T-cell (primary cell): ENCODE measurements at regions of chr15 and their contacts with region 1.

Region 1: DNA sequence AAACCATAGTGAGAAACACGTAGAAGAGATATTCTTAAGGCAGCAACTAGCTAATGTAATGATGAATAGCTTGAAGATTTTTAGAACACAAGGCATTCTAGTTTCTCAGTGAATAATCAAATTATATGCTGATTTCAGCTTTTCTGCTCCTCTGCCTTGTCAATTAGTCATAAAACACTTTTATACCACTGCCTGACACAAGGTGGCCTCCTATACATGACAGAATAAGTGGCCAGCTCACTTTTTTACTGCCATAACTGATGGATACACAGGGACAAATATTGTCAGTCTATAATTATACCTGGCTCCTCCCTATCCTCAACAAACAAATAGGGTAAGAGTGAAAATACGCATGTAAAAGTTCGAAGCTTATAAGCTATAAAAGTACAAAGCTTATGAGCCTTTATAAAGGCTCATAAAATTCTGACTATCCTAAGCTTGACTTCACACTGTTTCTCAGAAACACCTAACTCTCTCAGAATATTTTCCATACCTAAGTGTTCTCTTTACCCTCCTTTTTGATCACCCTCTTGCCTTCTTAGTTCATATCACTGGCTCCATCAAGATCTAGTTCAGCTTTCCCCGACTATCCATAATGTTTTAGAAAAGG is 81.6 kb downstream of the HERC1 start:
- DNase-seq: peak in 22 of 35 experiments; percentile 9 to 71 (median 30)
- ATAC-seq: peak; percentile 58 to 77 (median 74)
- H3K4me3 ChIP-seq: no peak overlapping the region
- H3K4me3 Mint-ChIP-seq: no peak overlapping the region
- H3K27ac ChIP-seq: no peak overlapping the region
- H3K27ac Mint-ChIP-seq: peak overlapping the region; percentile 41 to 79
- H3K4me1 ChIP-seq: peaks cover 0 to 10% of the 10 kb centered on the region in 2 experiments
- H3K4me1 Mint-ChIP-seq: peaks cover 0 to 8% (median 6%) of the 10 kb centered on the region in 3 donors
- H3K27me3 ChIP-seq: no peaks in the 10 kb centered on the region
- H3K27me3 Mint-ChIP-seq: no peaks in the 10 kb centered on the region

Region 2: GRCh38 chr15:61888074-61888780 is 1864.0 kb before region 1 on chr15:
- CTCF ChIA-PET with region 1: no interaction called
- POLR2A ChIA-PET with region 1: no interaction called
- DNase-seq: no peak
- ATAC-seq: no peak
- H3K4me3 ChIP-seq: no peak overlapping the region
- H3K4me3 Mint-ChIP-seq: no peak overlapping the region
- H3K27ac ChIP-seq: no peak overlapping the region
- H3K27ac Mint-ChIP-seq: no peak overlapping the region
- H3K4me1 ChIP-seq: no peaks in the 10 kb centered on the region
- H3K4me1 Mint-ChIP-seq: no peaks in the 10 kb centered on the region
- H3K27me3 ChIP-seq: no peaks in the 10 kb centered on the region
- H3K27me3 Mint-ChIP-seq: no peaks in the 10 kb centered on the region

Region 3: DNA sequence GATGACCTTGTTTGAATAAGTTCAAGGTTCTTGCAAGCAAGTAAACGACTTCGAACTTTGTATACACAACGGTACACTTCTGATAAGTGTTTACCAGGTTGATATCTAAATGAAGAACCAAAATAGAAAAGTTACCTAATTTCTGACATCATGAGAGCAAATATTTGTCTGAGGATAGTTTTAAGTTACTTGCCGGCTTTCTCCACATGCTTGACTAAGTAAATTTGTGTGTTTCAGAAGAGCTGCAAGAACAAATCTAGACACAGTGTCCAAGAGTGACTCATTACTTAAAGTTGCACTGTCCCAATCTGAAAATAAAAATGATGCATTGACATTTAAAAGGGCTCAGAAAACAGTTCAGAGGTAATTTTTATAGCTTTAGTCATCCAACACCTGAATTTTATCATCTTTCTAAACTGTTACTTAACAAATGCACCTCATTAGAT is 33.6 kb before region 1 on chr15:
- CTCF ChIA-PET with region 1: no interaction called
- POLR2A ChIA-PET with region 1: no interaction called
- DNase-seq: no peak
- ATAC-seq: no peak
- H3K4me3 ChIP-seq: no peak overlapping the region
- H3K4me3 Mint-ChIP-seq: no peak overlapping the region
- H3K27ac ChIP-seq: no peak overlapping the region
- H3K27ac Mint-ChIP-seq: peak overlapping the region; percentile 50 to 53
- H3K4me1 ChIP-seq: no peaks in the 10 kb centered on the region
- H3K4me1 Mint-ChIP-seq: peaks cover 1 to 12% (median 2%) of the 10 kb centered on the region in 3 donors
- H3K27me3 ChIP-seq: no peaks in the 10 kb centered on the region
- H3K27me3 Mint-ChIP-seq: no peaks in the 10 kb centered on the region

Region 4: DNA sequence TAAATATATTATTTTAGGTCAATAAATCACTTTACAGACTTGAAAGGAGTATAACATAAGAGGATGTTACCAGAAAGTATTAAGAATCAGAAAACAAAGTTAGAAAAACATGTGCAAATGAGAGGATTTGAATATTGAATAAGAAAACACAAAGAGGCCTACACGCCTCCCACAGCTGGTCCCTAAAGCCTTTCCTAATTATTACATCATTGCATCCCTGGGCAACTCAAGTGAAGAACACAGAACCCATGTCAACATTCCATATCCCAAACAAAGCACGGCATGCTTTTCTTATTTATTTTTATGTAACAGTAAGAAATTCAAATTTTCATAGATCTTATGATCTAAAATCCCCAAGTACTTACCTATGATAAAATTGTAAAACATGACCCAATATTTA is 20.3 kb after region 1 on chr15:
- CTCF ChIA-PET with region 1: interaction called, 3 to 12 read pairs
- POLR2A ChIA-PET with region 1: no interaction called
- DNase-seq: no peak
- ATAC-seq: no peak
- H3K4me3 ChIP-seq: no peak overlapping the region
- H3K4me3 Mint-ChIP-seq: no peak overlapping the region
- H3K27ac ChIP-seq: no peak overlapping the region
- H3K27ac Mint-ChIP-seq: no peak overlapping the region
- H3K4me1 ChIP-seq: no peaks in the 10 kb centered on the region
- H3K4me1 Mint-ChIP-seq: peaks cover 53 to 63% (median 61%) of the 10 kb centered on the region in 3 donors
- H3K27me3 ChIP-seq: no peaks in the 10 kb centered on the region
- H3K27me3 Mint-ChIP-seq: no peaks in the 10 kb centered on the region

Region 5: DNA sequence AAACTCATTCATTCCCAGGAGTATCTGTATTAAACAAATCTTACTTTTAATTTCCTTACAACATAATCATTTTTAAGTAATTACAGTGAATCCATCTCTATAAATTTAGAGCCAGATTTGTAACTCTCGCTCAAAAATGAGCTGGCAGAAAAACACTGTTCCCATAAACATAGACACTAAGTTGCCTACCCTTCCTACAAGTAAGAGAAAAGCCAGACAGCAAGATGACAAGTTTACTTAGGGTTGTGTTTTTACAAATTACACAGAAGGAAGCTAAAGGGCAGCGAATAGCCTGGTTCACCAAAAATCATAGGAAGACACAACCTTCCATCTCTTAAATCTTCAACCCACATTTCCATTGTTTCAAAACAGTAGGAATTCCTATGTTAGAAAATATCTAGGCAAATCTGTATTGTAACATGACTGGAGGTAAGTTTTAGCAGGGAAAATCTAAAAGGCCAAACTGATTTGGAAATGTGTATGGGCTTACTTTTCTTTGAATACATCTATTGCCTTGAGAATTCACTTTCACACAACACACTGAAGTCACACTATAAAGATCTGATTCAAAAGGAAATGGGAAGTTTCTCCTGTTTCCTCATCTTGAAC is 59.9 kb after region 1 on chr15:
- CTCF ChIA-PET with region 1: no interaction called
- POLR2A ChIA-PET with region 1: no interaction called
- DNase-seq: no peak
- ATAC-seq: no peak
- H3K4me3 ChIP-seq: no peak overlapping the region
- H3K4me3 Mint-ChIP-seq: no peak overlapping the region
- H3K27ac ChIP-seq: no peak overlapping the region
- H3K27ac Mint-ChIP-seq: peak overlapping the region in 1 of 2 donors; percentile 44
- H3K4me1 ChIP-seq: peaks cover 15 to 33% of the 10 kb centered on the region in 2 experiments
- H3K4me1 Mint-ChIP-seq: peaks cover 83 to 97% (median 90%) of the 10 kb centered on the region in 3 donors
- H3K27me3 ChIP-seq: no peaks in the 10 kb centered on the region
- H3K27me3 Mint-ChIP-seq: no peaks in the 10 kb centered on the region

Region 6: GRCh38 chr15:63905558-63906265 is 153.5 kb after region 1 on chr15:
- CTCF ChIA-PET with region 1: no interaction called
- POLR2A ChIA-PET with region 1: no interaction called
- DNase-seq: peak in 3 of 35 experiments; percentile 5 to 54 (median 10)
- ATAC-seq: peak; percentile 72 to 91 (median 89)
- H3K4me3 ChIP-seq: peak overlapping the region in 1 of 2 donors; percentile 11
- H3K4me3 Mint-ChIP-seq: peak overlapping the region in 2 of 3 donors; percentile 9 to 56
- H3K27ac ChIP-seq: peak overlapping the region; percentile 63
- H3K27ac Mint-ChIP-seq: peak overlapping the region; percentile 93
- H3K4me1 ChIP-seq: peaks cover 13 to 40% of the 10 kb centered on the region in 2 experiments
- H3K4me1 Mint-ChIP-seq: peaks cover 24 to 35% (median 31%) of the 10 kb centered on the region in 3 donors
- H3K27me3 ChIP-seq: no peaks in the 10 kb centered on the region
- H3K27me3 Mint-ChIP-seq: no peaks in the 10 kb centered on the region

Region 7: DNA sequence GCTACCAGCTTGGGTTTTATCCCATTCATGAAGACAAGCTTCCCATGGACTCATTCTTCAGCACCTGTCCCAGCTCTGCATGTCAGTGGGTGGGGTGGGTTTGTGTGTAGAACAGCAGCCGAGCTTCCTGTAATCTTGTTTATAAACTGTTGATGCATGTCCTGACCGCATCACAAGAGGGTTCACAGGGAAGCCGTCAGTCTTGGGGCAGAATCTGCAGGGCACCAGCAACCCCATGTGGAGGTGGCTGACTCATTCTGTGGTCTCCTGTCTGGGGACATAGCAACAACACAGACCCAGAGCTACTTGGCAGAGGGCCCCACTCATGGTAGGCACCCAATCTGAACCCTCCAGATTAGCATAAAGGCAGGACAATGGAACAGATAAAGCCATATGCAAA is 258.5 kb after region 1 on chr15:
- CTCF ChIA-PET with region 1: interaction called, 3 to 33 read pairs
- POLR2A ChIA-PET with region 1: no interaction called
- DNase-seq: peak; percentile 64 to 96 (median 87)
- ATAC-seq: peak; percentile 97 to 99 (median 98)
- H3K4me3 ChIP-seq: no peak overlapping the region
- H3K4me3 Mint-ChIP-seq: peak overlapping the region; percentile 62 to 73 (median 64)
- H3K27ac ChIP-seq: peak overlapping the region; percentile 87
- H3K27ac Mint-ChIP-seq: peak overlapping the region; percentile 97 to 98
- H3K4me1 ChIP-seq: peaks cover 10 to 34% of the 10 kb centered on the region in 2 experiments
- H3K4me1 Mint-ChIP-seq: peaks cover 31 to 81% (median 48%) of the 10 kb centered on the region in 3 donors
- H3K27me3 ChIP-seq: no peaks in the 10 kb centered on the region
- H3K27me3 Mint-ChIP-seq: no peaks in the 10 kb centered on the region

Region 8: GRCh38 chr15:64067564-64068030 is 315.4 kb after region 1 on chr15:
- CTCF ChIA-PET with region 1: interaction called, 24 to 109 read pairs
- POLR2A ChIA-PET with region 1: interaction called in 1 of 2 experiments, 5 read pairs
- DNase-seq: peak; percentile 17 to 83 (median 54)
- ATAC-seq: peak; percentile 84 to 88 (median 87)
- H3K4me3 ChIP-seq: no peak overlapping the region
- H3K4me3 Mint-ChIP-seq: no peak overlapping the region
- H3K27ac ChIP-seq: no peak overlapping the region
- H3K27ac Mint-ChIP-seq: no peak overlapping the region
- H3K4me1 ChIP-seq: peaks cover 0 to 11% of the 10 kb centered on the region in 2 experiments
- H3K4me1 Mint-ChIP-seq: peaks cover 0 to 9% (median 3%) of the 10 kb centered on the region in 3 donors
- H3K27me3 ChIP-seq: peaks cover 0 to 2% of the 10 kb centered on the region in 2 experiments
- H3K27me3 Mint-ChIP-seq: no peaks in the 10 kb centered on the region